ENCODE measurements at regions of chr6 and their contacts with region 1.

Region 1: GRCh38 chr6:68778356-68779020 is 143.4 kb downstream of the ADGRB3 start:
- DNase-seq: peak; percentile 11
- ATAC-seq: peak; percentile 81
- H3K4me3 ChIP-seq: no peak overlapping the region
- H3K27ac ChIP-seq: no peak overlapping the region
- H3K4me1 ChIP-seq: no peaks in the 10 kb centered on the region
- H3K27me3 ChIP-seq: no peaks in the 10 kb centered on the region
- CTCF ChIP-seq: peak; percentile 57
- EP300 ChIP-seq: no peak
- POLR2A ChIP-seq: no peak
- RAD21 ChIP-seq: peak; percentile 15; the same call in 1 of the 2 replicates

Region 2: GRCh38 chr6:66926065-66926464 is 1852.4 kb before region 1 on chr6:
- CTCF ChIA-PET with region 1: no interaction called
- POLR2A ChIA-PET with region 1: no interaction called
- in situ Hi-C with region 1: no loop called
- intact Hi-C with region 1: loop called (anchors 5 kb)
- DNase-seq: peak; percentile 69
- ATAC-seq: peak; percentile 96
- H3K4me3 ChIP-seq: no peak overlapping the region
- H3K27ac ChIP-seq: no peak overlapping the region
- H3K4me1 ChIP-seq: no peaks in the 10 kb centered on the region
- H3K27me3 ChIP-seq: no peaks in the 10 kb centered on the region
- CTCF ChIP-seq: peak; percentile 82
- EP300 ChIP-seq: no peak
- POLR2A ChIP-seq: no peak
- RAD21 ChIP-seq: peak; percentile 69; the same call in 1 of the 2 replicates

Region 3: GRCh38 chr6:68343901-68344300 is 434.6 kb before region 1 on chr6:
- CTCF ChIA-PET with region 1: no interaction called
- POLR2A ChIA-PET with region 1: no interaction called
- in situ Hi-C with region 1: no loop called
- intact Hi-C with region 1: loop called (anchors 2 kb)
- DNase-seq: peak; percentile 26
- ATAC-seq: peak; percentile 81
- H3K4me3 ChIP-seq: no peak overlapping the region
- H3K27ac ChIP-seq: no peak overlapping the region
- H3K4me1 ChIP-seq: no peaks in the 10 kb centered on the region
- H3K27me3 ChIP-seq: no peaks in the 10 kb centered on the region
- CTCF ChIP-seq: peak; percentile 37
- EP300 ChIP-seq: no peak
- POLR2A ChIP-seq: no peak
- RAD21 ChIP-seq: no peak

Region 4: DNA sequence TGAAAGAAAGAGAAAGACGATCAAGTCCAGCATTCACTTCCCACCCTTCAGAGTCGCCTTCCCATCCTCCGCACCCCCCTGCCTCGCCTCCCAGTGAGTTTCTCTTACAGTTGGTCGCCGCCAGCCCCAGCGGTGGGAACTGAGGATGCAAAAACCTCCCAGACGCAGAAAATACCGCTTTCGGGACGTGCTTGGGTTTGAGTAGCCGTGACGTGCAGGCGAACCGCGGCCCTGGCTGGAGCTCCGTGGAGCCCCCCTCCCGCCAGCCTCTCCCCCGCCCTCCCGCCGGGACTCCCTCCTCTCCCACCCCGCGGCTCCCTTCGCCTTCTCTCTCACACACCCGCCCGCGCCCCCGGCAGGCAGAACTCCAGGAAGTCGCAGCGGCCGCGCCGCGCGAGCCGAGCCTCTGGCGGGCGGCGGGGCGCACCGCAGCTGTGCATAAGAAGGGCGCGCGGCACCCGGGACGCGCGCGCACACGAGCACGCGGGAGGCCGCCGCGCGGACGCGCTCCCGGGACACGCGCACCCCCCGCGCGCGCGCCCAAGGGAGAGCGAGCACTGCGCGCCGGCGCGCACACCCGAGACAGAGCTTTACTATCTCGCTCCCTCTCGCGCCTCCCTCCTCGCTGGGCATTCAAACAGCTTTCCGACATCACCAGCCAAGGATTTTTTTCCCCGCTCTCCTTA is 143.6 kb before region 1 on chr6 and contains the start of gene ADGRB3:
- CTCF ChIA-PET with region 1: interaction called, 3 read pairs
- POLR2A ChIA-PET with region 1: no interaction called
- in situ Hi-C with region 1: no loop called
- intact Hi-C with region 1: loop called (anchors 1 kb)
- DNase-seq: peak; percentile 28
- ATAC-seq: peak; percentile 97
- H3K4me3 ChIP-seq: peak within 1 kb of the TSS; percentile 43 to 76 (median 47)
- H3K27ac ChIP-seq: no peak within 1 kb of the TSS
- H3K4me1 ChIP-seq: peaks cover 13% of the 10 kb centered on the region
- H3K27me3 ChIP-seq: peaks cover 0 to 19% of the 10 kb centered on the region in 2 experiments; a peak in 3 of 5 replicates
- CTCF ChIP-seq: no peak; the same call in 1 of the 2 replicates
- EP300 ChIP-seq: no peak
- POLR2A ChIP-seq: no peak
- RAD21 ChIP-seq: peak; percentile 25; the same call in 1 of the 2 replicates
- total RNA-seq, gene ADGRB3: not detected in 2 replicates

Region 5: GRCh38 chr6:68728159-68728979 is 50.1 kb before region 1 on chr6:
- CTCF ChIA-PET with region 1: no interaction called
- POLR2A ChIA-PET with region 1: no interaction called
- in situ Hi-C with region 1: no loop called
- intact Hi-C with region 1: no loop called
- DNase-seq: no peak
- ATAC-seq: no peak
- H3K4me3 ChIP-seq: no peak overlapping the region
- H3K27ac ChIP-seq: no peak overlapping the region
- H3K4me1 ChIP-seq: no peaks in the 10 kb centered on the region
- H3K27me3 ChIP-seq: no peaks in the 10 kb centered on the region
- CTCF ChIP-seq: no peak
- EP300 ChIP-seq: no peak
- POLR2A ChIP-seq: no peak
- RAD21 ChIP-seq: no peak